ENCODE measurements at regions of chr3 and their contacts with region 1.

Region 1: DNA sequence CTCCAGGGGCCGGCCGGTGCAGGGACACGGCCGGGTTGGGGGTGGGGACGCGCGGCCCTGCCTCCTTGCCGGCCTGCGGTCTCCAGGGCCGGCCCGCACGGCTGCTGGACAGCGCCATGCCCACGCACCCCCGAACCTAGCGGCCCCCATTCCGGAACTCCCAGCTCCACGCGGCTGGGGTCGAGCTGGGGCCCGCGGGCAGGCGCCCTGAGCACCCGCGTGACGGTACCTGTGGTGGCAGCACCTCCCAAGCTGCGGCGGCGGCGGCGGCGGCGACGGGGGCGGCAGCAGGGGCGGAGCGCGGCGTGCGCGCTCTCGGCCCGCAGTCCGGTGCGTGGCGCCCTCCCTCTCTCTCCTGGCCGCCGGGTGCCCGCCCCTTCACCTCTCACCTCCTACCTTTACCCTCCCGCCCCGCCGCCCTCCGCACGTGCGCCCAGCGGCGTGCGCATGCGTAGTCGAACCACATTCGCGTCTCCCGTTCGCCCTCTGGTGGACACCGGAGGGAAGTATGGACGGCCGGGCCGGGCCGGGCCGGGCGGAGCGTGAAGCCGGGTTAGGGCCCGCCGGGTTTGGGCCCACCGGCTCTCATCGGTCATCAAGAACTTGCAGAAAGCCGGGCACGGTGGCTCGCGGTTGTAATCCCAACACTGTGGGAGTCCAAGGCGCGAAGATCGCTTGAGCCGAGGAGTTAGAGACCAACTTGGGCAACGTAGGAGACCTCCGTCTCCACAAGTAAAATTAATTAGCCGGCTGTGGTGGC is at the start of gene SCAP:
- DNase-seq: peak; percentile 68
- ATAC-seq: peak; percentile 94
- H3K4me3 ChIP-seq: peak within 1 kb of the TSS; percentile 65 to 97
- H3K27ac ChIP-seq: peak within 1 kb of the TSS; percentile 63
- H3K4me1 ChIP-seq: peaks cover 2 to 24% of the 10 kb centered on the region in 2 experiments; a peak in 2 of 4 replicates
- H3K27me3 ChIP-seq: no peaks in the 10 kb centered on the region
- CTCF ChIP-seq: peak; percentile 78 to 84 (median 79); a peak in 5 of 6 replicates
- POLR2A ChIP-seq: peak; percentile 52
- RAD21 ChIP-seq: peak; percentile 65
- total RNA-seq, gene SCAP: 67.6 TPM

Region 2: GRCh38 chr3:47347217-47347801 is 128.4 kb before region 1 on chr3:
- CTCF ChIA-PET with region 1: no interaction called
- POLR2A ChIA-PET with region 1: no interaction called
- RAD21 ChIA-PET with region 1: no interaction called
- intact Hi-C with region 1: no loop called
- DNase-seq: no peak
- ATAC-seq: no peak
- H3K4me3 ChIP-seq: no peak overlapping the region
- H3K27ac ChIP-seq: no peak overlapping the region
- H3K4me1 ChIP-seq: no peaks in the 10 kb centered on the region
- H3K27me3 ChIP-seq: no peaks in the 10 kb centered on the region
- CTCF ChIP-seq: no peak
- POLR2A ChIP-seq: no peak
- RAD21 ChIP-seq: no peak

Region 3: DNA sequence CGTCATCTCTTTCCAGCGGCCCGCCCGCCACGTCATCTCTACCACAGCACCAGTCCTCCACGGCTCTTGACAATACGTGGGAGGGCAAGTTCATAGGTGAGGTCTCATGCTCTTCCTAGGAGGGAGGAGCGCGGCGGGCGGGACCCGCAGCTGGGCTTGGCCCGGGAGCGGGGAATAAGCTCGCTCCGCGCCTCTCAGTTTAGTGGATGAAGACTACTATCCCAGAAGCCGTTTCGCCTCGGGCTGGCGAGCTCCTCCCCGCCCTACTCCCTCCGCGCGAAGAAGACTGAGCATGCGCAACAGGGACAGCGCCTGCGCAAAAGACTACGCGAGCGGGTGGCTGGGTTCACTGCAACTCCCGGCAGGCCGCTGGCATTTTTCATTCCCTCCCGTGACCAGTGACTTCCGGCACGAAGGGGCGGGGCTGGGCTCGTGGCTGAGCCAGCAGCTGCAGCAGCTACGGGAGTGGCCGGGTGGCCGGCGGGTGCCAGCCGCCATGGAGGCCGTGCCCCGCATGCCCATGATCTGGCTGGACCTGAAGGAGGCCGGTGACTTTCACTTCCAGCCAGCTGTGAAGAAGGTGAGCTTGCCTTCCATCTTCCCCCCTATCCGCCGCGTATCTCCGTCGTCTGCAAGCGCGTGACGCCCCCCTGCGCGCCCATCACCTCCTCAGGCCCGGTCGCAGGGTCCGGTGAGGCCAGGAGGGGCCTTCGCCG is 95.0 kb before region 1 on chr3 and contains the start of gene PTPN23:
- CTCF ChIA-PET with region 1: no interaction called
- POLR2A ChIA-PET with region 1: no interaction called
- RAD21 ChIA-PET with region 1: no interaction called
- intact Hi-C with region 1: loop called (anchors 1 kb)
- DNase-seq: peak; percentile 97
- ATAC-seq: peak; percentile 78
- H3K4me3 ChIP-seq: peak within 1 kb of the TSS; percentile 87 to 97
- H3K27ac ChIP-seq: peak within 1 kb of the TSS; percentile 83
- H3K4me1 ChIP-seq: peaks cover 9 to 25% of the 10 kb centered on the region in 2 experiments
- H3K27me3 ChIP-seq: no peaks in the 10 kb centered on the region
- CTCF ChIP-seq: no peak
- POLR2A ChIP-seq: peak; percentile 13
- RAD21 ChIP-seq: no peak
- total RNA-seq, gene PTPN23: 56.5 TPM

Region 4: DNA sequence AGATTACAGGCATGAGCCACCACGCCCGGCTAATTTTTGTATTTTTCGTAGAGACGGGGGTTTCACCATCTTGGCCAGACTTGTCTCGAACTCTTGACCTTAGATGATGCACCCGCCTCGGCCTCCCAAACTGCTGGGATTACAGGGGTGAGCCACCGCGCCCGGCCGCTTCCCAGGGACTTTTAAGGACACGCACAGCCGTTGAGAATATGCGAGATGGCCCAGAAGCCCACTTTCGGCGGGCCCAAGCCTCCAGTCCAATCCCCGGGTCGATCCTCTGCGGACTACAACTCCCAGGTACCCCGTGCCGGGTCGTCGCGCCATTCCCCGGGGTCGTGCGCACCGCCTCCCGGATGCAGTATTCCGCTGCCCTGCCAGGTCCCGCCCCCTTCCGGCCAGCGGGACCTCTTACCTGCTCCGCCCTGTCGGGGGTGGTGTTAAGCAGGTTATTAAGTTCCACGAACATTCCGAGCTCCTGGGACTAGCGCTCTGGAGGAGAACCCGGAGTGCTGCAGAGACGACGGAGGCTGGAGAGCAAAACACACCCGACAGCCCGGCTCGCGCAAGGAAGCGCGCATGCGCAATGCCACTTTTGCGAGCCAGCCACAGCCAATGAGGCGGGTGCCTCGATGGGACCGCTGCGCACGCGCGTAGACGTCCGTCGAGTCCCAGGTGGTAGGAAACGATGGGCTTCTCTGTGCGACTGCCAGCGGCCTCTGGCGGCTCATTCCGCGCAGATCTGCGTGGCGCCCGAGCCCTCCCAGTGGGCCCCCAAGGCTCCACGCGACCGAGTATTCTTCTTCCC is 37.6 kb after region 1 on chr3 and contains the start of gene ELP6:
- CTCF ChIA-PET with region 1: no interaction called
- POLR2A ChIA-PET with region 1: no interaction called
- RAD21 ChIA-PET with region 1: no interaction called
- intact Hi-C with region 1: loop called (anchors 2 kb)
- DNase-seq: peak; percentile 92
- ATAC-seq: peak; percentile 95
- H3K4me3 ChIP-seq: peak within 1 kb of the TSS; percentile 84 to 94
- H3K27ac ChIP-seq: peak within 1 kb of the TSS; percentile 86
- H3K4me1 ChIP-seq: peaks cover 2 to 20% of the 10 kb centered on the region in 2 experiments; a peak in 3 of 4 replicates
- H3K27me3 ChIP-seq: no peaks in the 10 kb centered on the region
- CTCF ChIP-seq: peak; percentile 40 to 60 (median 44); a peak in 5 of 6 replicates
- POLR2A ChIP-seq: peak; percentile 57
- RAD21 ChIP-seq: peak; percentile 50
- total RNA-seq, gene ELP6: 38.8 TPM